Activated CD4-positive, alpha-beta memory T cell treated with anti-CD3 and anti-CD28 coated beads for 36 hours (primary cell): ENCODE measurements at regions of chr5 and their contacts with region 1.

Region 1: GRCh38 chr5:179732417-179732917 is at the start of gene MAML1:
- DNase-seq: peak; percentile 100
- H3K4me3 Mint-ChIP-seq: peak within 1 kb of the TSS; percentile 98
- H3K27ac Mint-ChIP-seq: peak within 1 kb of the TSS; percentile 92
- H3K4me1 Mint-ChIP-seq: peaks cover 42% of the 10 kb centered on the region
- H3K27me3 Mint-ChIP-seq: no peaks in the 10 kb centered on the region
- total RNA-seq, gene MAML1: 20.3 to 22.2 TPM

Region 2: DNA sequence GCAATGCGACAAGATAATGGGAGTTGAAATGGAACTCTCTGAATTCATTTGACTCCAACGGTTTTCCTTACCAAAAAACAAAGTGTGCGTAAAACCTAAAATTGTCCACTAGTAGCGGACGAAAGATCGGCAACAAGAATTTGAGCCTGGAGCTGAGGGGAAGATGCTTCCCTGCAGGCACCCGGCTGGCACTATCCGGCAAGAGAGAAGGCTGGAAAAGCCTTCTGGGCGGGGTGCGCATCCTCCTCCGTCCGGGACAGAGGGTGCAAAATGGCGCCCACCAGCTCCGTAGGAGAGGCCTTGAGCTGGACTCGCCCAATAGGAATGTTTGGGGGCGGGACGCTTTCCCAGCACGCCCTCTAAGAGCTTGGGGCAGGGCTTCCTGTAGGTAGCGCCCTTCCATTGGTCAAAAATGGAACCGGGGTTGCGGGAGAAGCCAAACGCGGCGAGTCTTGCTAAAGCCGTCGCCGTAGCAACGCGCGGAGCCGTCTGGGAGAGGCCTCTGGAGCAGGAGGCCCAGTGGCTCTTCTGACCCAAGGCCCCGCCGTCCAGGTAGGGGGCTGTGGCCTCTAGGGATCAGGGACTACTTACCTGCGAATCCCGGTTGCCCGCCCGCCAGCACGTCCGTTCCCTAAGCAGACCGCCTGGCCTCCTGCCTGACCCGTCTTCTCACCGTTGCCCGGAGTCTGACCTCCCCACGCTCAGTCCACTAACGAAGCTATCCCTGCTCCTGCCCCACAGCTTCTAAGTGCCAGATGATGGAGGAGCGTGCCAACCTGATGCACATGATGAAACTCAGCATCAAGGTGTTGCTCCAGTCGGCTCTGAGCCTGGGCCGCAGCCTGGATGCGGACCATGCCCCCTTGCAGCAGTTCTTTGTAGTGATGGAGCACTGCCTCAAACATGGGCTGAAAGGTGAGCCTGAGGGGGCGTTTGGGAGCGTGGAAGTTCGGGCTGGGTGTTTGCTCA is 172.9 kb before region 1 on chr5:
- CTCF ChIA-PET with region 1: no interaction called
- POLR2A ChIA-PET with region 1: interaction called, 5 read pairs
- intact Hi-C with region 1: loop called (anchors 1 kb)
- DNase-seq: peak; percentile 97
- H3K4me3 Mint-ChIP-seq: peak overlapping the region; percentile 85
- H3K27ac Mint-ChIP-seq: peak overlapping the region; percentile 86
- H3K4me1 Mint-ChIP-seq: peaks cover 17% of the 10 kb centered on the region
- H3K27me3 Mint-ChIP-seq: no peaks in the 10 kb centered on the region

Region 3: GRCh38 chr5:179577286-179577960 is 155.0 kb before region 1 on chr5:
- CTCF ChIA-PET with region 1: no interaction called
- POLR2A ChIA-PET with region 1: no interaction called
- intact Hi-C with region 1: no loop called
- DNase-seq: no peak
- H3K4me3 Mint-ChIP-seq: no peak overlapping the region
- H3K27ac Mint-ChIP-seq: no peak overlapping the region
- H3K4me1 Mint-ChIP-seq: no peaks in the 10 kb centered on the region
- H3K27me3 Mint-ChIP-seq: no peaks in the 10 kb centered on the region

Region 4: DNA sequence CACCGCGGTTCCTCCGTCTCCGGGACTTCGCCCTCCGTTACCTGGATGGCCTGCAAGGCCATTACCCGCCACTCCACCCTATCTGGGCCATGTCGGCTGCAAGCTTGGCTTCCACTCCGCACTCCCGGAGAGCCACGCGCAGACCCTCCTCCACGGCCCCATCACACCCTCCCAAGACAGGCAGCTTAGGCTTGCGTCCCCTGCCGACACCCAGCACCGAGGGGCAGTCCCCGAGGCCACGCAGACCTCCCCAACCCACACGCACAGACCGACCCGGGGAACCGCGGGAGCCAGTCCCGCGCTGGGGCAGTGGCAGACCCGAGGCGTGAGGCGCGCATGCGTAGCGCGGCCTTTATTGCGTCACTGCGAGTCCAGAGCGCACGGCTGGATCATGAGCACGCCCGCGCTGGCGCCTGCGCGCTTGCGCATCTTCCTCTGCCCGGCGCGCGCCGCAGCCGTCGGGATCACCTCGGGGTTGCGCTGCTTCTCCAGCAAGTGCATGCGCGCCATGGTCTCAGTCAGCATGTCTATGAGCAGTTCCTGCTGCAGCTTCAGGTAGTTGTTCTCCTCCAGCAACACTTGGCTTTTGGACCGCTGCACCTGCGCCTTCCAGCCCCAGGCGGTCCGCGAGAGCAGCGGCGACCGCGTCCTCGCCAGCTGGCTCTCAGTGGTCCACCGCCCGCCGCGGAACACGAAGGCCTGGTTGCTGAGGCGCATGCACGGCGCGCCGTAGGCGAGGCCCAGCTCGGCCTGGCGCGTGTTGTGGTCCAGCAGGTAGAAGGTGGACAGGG is 54.0 kb before region 1 on chr5:
- CTCF ChIA-PET with region 1: interaction called, 3 read pairs
- POLR2A ChIA-PET with region 1: interaction called, 13 read pairs
- intact Hi-C with region 1: loop called (anchors 1 kb)
- DNase-seq: peak; percentile 96
- H3K4me3 Mint-ChIP-seq: peak overlapping the region; percentile 94
- H3K27ac Mint-ChIP-seq: peak overlapping the region; percentile 93
- H3K4me1 Mint-ChIP-seq: peaks cover 24% of the 10 kb centered on the region
- H3K27me3 Mint-ChIP-seq: no peaks in the 10 kb centered on the region

Region 5: DNA sequence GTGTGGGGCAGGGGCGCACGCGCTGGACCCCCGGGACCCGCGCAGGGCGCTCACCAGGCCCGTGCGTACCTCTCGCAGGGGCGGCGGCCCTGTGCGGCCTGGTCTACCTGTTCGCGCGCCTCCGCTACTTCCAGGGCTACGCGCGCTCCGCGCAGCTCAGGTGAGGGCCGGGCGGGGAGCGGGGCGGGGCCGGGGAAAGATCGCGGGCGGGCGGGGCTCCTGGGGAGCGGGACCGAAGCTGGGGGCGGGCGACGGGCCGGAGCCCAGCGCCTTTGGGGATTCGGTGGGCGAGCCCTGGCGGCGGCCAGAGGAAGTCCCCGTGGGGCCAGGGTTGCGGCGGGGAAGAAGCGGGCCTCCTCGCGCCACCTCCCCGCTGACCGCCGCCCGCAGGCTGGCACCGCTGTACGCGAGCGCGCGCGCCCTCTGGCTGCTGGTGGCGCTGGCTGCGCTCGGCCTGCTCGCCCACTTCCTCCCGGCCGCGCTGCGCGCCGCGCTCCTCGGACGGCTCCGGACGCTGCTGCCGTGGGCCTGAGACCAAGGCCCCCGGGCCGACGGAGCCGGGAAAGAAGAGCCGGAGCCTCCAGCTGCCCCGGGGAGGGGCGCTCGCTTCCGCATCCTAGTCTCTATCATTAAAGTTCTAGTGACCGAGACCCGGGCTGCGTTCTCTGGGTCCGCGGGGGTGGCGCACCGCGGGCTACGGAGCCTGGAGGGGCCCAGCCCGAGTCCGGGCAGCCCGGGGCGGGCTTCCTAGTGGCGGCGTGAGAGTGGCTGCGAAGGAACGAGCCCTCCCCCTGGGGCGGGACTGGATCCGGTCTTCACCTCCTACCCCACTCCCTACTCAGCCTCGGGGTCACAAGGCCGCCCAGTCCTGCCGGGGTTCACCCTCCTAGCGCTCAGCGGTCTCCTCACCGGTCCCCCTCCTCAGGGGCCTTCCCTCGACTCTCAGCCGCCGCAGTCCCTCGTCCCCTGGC is 63.7 kb after region 1 on chr5:
- CTCF ChIA-PET with region 1: no interaction called
- POLR2A ChIA-PET with region 1: no interaction called
- intact Hi-C with region 1: loop called (anchors 1 kb)
- DNase-seq: peak; percentile 81
- H3K4me3 Mint-ChIP-seq: peak overlapping the region; percentile 39
- H3K27ac Mint-ChIP-seq: peak overlapping the region; percentile 30
- H3K4me1 Mint-ChIP-seq: peaks cover 25% of the 10 kb centered on the region
- H3K27me3 Mint-ChIP-seq: no peaks in the 10 kb centered on the region

Region 6: DNA sequence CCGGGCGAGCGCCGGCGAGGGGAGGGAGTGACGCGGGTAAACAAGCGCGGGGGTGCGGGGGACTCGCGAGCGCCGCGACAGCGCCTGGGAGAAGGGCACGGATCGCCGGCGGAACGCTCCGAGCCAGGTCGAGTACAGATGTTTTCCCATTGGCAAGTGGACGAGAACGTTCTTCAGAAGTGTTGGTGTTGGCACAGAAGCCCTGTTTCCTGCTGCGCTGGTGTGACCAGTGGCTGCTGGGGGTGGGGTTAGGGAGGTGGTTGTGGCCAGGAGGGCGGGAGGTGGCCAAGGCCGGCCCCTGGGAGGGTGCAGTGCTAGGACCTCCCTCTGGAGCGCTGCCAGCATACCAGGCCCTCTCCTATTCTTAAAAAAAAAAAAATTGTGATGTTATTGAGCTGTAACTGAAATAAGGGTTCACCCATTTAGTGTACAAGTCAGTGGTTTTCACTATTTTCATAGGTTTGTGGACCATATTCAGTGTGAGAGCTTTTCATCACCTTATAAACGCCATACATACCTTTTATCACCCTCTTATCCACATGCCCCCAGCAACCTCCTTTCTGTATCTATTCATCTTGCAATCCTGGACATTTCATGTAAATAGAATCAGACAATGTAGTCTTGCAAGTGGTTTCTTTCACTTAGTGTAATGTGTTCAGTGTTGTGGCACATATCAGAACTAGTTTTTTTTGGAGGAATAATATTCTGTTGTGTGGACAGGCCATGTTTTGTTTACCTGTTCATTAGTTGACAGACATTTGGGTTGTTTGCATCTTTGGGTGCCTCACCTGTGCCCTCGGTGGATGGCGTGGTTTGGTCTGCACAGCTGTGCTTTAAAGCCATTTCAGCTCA is 89.3 kb after region 1 on chr5:
- CTCF ChIA-PET with region 1: no interaction called
- POLR2A ChIA-PET with region 1: no interaction called
- intact Hi-C with region 1: loop called (anchors 1 kb)
- DNase-seq: peak; percentile 92
- H3K4me3 Mint-ChIP-seq: peak overlapping the region; percentile 90
- H3K27ac Mint-ChIP-seq: peak overlapping the region; percentile 95
- H3K4me1 Mint-ChIP-seq: peaks cover 49% of the 10 kb centered on the region
- H3K27me3 Mint-ChIP-seq: no peaks in the 10 kb centered on the region

Region 7: GRCh38 chr5:179858586-179859427 is 126.3 kb after region 1 on chr5 and contains the start of gene MRNIP:
- CTCF ChIA-PET with region 1: no interaction called
- POLR2A ChIA-PET with region 1: no interaction called
- intact Hi-C with region 1: loop called (anchors 1 kb)
- DNase-seq: peak; percentile 94
- H3K4me3 Mint-ChIP-seq: peak within 1 kb of the TSS; percentile 79
- H3K27ac Mint-ChIP-seq: peak within 1 kb of the TSS; percentile 61
- H3K4me1 Mint-ChIP-seq: peaks cover 16% of the 10 kb centered on the region
- H3K27me3 Mint-ChIP-seq: no peaks in the 10 kb centered on the region
- total RNA-seq, gene MRNIP: 19.8 to 24.9 TPM